Gastrocnemius medialis (tissue), 4 donors: ENCODE measurements at regions of chr15 and their contacts with region 1.

Region 1: GRCh38 chr15:49155110-49155833 is at the start of gene COPS2:
- DNase-seq: peak; percentile 93 to 95
- ATAC-seq: peak; percentile 99 to 100
- H3K4me3 ChIP-seq: peak within 1 kb of the TSS; percentile 73 to 99 (median 84)
- H3K27ac ChIP-seq: peak within 1 kb of the TSS; percentile 85 to 96 (median 90)
- H3K4me1 ChIP-seq: peaks cover 36 to 45% of the 10 kb centered on the region in 2 donors
- H3K27me3 ChIP-seq: no peaks in the 10 kb centered on the region
- CTCF ChIP-seq: no peak
- POLR2A ChIP-seq: peak; percentile 45 to 66
- total RNA-seq, gene COPS2: 69.5 to 98.2 (median 93.2) TPM

Region 2: DNA sequence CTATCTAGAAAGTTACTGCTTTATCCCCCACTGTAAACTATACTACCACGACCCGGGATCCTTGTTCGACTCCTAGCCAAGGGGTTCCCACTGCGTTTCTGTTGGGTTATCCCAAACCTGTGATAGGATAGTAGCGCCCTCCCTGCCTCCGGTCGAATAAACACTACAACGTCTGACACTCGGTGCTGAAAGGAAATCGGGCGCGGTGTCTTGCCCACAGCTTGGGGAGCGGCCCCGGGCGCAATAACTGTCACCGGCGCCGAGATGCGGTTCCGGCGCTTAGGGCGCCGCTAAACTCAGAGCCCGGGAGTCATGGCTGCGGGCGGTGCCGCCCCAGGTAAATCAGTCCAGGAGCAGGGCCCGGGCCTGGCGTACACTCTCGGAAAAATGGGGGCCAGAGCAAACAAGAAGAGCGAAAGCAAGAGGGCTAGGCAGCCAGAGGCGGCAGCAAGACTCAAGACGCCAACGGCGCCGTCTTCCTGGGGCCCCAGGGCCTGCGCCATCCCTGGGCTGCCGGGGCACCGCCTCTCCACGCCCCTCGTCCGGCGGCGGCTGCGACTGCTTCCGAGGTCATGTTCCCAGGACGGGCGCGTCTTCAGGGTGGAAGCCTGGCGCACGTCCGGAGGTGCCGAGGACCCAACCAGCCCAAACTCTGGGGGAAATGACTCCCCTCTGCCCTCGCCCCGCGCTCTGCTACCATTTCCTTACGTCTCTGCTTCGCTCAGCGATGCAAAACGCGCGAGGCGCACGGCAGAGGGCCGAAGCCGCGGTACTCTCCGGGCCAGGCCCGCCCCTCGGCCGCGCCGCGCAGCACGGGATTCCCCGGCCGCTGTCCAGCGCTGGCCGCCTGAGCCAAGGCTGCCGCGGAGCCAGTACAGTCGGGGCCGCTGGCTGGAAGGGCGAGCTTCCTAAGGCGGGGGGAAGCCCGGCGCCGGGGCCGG is 824.1 kb before region 1 on chr15 and contains the start of gene DUT:
- in situ Hi-C with region 1: no loop called
- intact Hi-C with region 1: loop called (anchors 5 kb)
- DNase-seq: peak; percentile 73 to 75
- ATAC-seq: peak; percentile 92 to 96
- H3K4me3 ChIP-seq: peak within 1 kb of the TSS; percentile 67 to 94 (median 86)
- H3K27ac ChIP-seq: peak within 1 kb of the TSS; percentile 90 to 95 (median 92)
- H3K4me1 ChIP-seq: peaks cover 16 to 17% of the 10 kb centered on the region in 2 donors
- H3K27me3 ChIP-seq: no peaks in the 10 kb centered on the region
- CTCF ChIP-seq: peak in 1 of 5 experiments; percentile 17
- POLR2A ChIP-seq: peak; percentile 81 to 84
- total RNA-seq, gene DUT: 40.0 to 73.0 (median 45.0) TPM

Region 3: GRCh38 chr15:48617619-48618018 is 537.7 kb before region 1 on chr15:
- in situ Hi-C with region 1: no loop called
- intact Hi-C with region 1: no loop called
- DNase-seq: peak in 1 of 2 donors; percentile 17
- ATAC-seq: peak in 1 of 2 donors; percentile 66
- H3K4me3 ChIP-seq: no peak overlapping the region
- H3K27ac ChIP-seq: no peak overlapping the region
- H3K4me1 ChIP-seq: peaks cover 0 to 7% of the 10 kb centered on the region in 2 donors
- H3K27me3 ChIP-seq: no peaks in the 10 kb centered on the region
- CTCF ChIP-seq: no peak
- POLR2A ChIP-seq: no peak

Region 4: GRCh38 chr15:48868536-48868935 is 286.7 kb before region 1 on chr15:
- in situ Hi-C with region 1: loop called in 2 of 4 experiments (anchors 5 to 25 kb)
- intact Hi-C with region 1: no loop called
- DNase-seq: no peak
- ATAC-seq: no peak
- H3K4me3 ChIP-seq: no peak overlapping the region
- H3K27ac ChIP-seq: no peak overlapping the region
- H3K4me1 ChIP-seq: no peaks in the 10 kb centered on the region
- H3K27me3 ChIP-seq: no peaks in the 10 kb centered on the region
- CTCF ChIP-seq: no peak
- POLR2A ChIP-seq: no peak

Region 5: GRCh38 chr15:48877630-48878595 is 277.4 kb before region 1 on chr15 and contains the start of gene EID1:
- in situ Hi-C with region 1: loop called in 1 of 4 experiments (anchors 25 kb)
- intact Hi-C with region 1: loop called (anchors 5 kb)
- DNase-seq: peak; percentile 79 to 89
- ATAC-seq: peak; percentile 98 to 99
- H3K4me3 ChIP-seq: peak within 1 kb of the TSS; percentile 74 to 87 (median 81)
- H3K27ac ChIP-seq: peak within 1 kb of the TSS; percentile 79 to 87 (median 83)
- H3K4me1 ChIP-seq: peaks cover 18 to 19% of the 10 kb centered on the region in 2 donors
- H3K27me3 ChIP-seq: no peaks in the 10 kb centered on the region
- CTCF ChIP-seq: no peak
- POLR2A ChIP-seq: peak; percentile 49 to 50
- total RNA-seq, gene EID1: 110 to 146 (median 135) TPM

Region 6: DNA sequence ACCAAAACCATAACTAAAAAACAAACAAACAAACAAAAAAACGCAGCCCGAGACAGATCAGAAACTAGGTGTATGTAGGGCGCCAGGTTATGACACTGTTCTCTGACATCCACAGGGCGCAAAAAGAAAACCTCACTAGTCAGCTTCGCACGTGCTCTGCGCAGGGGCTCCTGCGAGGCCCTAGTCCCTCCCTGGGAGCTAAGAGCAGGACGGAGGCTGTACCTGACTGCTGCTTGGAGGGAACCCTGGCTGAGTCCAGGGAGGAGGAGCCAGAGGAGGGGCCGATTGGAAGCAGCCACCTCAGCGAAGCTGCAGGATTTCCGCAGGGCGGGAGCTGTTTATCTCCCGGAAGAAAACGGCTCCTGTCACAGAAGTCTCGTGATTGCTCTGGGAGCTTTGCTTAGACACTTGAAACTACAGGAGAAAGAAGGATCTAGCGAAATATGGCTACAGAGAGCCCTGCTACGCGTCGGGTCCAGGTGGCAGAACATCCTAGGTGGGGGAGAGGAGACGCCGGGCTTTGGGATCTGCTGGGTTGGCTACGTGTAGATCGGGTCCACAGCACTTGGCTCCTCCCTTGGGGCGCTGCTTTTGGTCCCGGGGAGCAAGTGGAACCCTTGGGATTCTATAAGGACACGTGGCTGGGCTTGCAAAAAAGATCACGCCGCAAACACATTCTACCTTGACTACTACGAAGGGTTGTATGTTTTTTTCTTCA is 14.8 kb after region 1 on chr15 and contains the start of gene GALK2:
- in situ Hi-C with region 1: no loop called
- intact Hi-C with region 1: loop called (anchors 1 kb)
- DNase-seq: peak; percentile 72 to 80
- ATAC-seq: peak; percentile 96 to 98
- H3K4me3 ChIP-seq: peak within 1 kb of the TSS; percentile 58 to 89 (median 78)
- H3K27ac ChIP-seq: peak within 1 kb of the TSS; percentile 82 to 91 (median 86)
- H3K4me1 ChIP-seq: no peaks in the 10 kb centered on the region
- H3K27me3 ChIP-seq: no peaks in the 10 kb centered on the region
- CTCF ChIP-seq: no peak
- POLR2A ChIP-seq: peak; percentile 42 to 50
- total RNA-seq, gene GALK2: 19.1 to 29.5 (median 22.9) TPM

Region 7: GRCh38 chr15:49185473-49185872 is 30.2 kb after region 1 on chr15:
- in situ Hi-C with region 1: no loop called
- intact Hi-C with region 1: no loop called
- DNase-seq: no peak
- ATAC-seq: no peak
- H3K4me3 ChIP-seq: no peak overlapping the region
- H3K27ac ChIP-seq: no peak overlapping the region
- H3K4me1 ChIP-seq: peaks cover 0 to 7% of the 10 kb centered on the region in 2 donors
- H3K27me3 ChIP-seq: no peaks in the 10 kb centered on the region
- CTCF ChIP-seq: no peak
- POLR2A ChIP-seq: no peak

Region 8: GRCh38 chr15:50354838-50355618 is 1199.8 kb after region 1 on chr15 and contains the start of gene GABPB1:
- in situ Hi-C with region 1: no loop called
- intact Hi-C with region 1: loop called (anchors 1 kb)
- DNase-seq: peak; percentile 79 to 80
- ATAC-seq: peak; percentile 87 to 90
- H3K4me3 ChIP-seq: peak within 1 kb of the TSS; percentile 79 to 94 (median 81)
- H3K27ac ChIP-seq: peak within 1 kb of the TSS; percentile 93 to 97 (median 94)
- H3K4me1 ChIP-seq: peaks cover 44 to 46% of the 10 kb centered on the region in 2 donors
- H3K27me3 ChIP-seq: no peaks in the 10 kb centered on the region
- CTCF ChIP-seq: no peak
- POLR2A ChIP-seq: peak; percentile 53 to 64
- total RNA-seq, gene GABPB1: 7.4 to 11.5 (median 8.7) TPM